ENCODE measurements at regions of chr12 and their contacts with region 1.

Region 1: GRCh38 chr12:29591140-29592020 is 93.9 kb upstream of the OVCH1 start:
- DNase-seq: peak; percentile 24
- ATAC-seq: peak; percentile 47; the same call in 1 of the 2 replicates
- H3K4me3 ChIP-seq: no peak overlapping the region
- H3K27ac ChIP-seq: no peak overlapping the region
- H3K4me1 ChIP-seq: peaks cover 8% of the 10 kb centered on the region
- H3K27me3 ChIP-seq: no peaks in the 10 kb centered on the region
- CTCF ChIP-seq: peak; percentile 31
- POLR2A ChIP-seq: no peak
- RAD21 ChIP-seq: no peak

Region 2: DNA sequence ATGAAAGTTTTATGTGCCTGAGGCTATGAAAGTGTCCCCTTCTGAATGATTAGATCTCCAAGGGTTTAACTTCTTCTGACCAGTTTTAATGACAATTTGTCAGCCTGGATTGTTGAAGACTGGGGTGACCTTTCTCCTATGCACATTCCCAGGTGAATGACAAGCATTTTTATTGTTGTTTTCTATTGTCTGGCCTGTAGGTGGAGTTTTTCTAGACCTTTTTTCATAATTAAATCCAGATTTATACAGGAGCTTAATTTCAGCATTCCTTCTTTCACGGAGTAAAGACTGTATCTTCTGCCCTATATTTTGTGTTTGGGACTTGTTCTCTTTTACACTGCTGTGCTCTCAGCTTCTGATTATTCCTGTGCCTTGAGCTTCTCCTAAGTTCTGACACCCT is 567.3 kb before region 1 on chr12:
- CTCF ChIA-PET with region 1: no interaction called
- POLR2A ChIA-PET with region 1: no interaction called
- dilution Hi-C with region 1: no loop called
- in situ Hi-C with region 1: no loop called
- intact Hi-C with region 1: no loop called
- DNase-seq: no peak
- ATAC-seq: no peak
- H3K4me3 ChIP-seq: no peak overlapping the region
- H3K27ac ChIP-seq: no peak overlapping the region
- H3K4me1 ChIP-seq: no peaks in the 10 kb centered on the region
- H3K27me3 ChIP-seq: no peaks in the 10 kb centered on the region; the same call in 1 of the 2 replicates
- CTCF ChIP-seq: 0 out of 2 replicates have a peak, but pooled peaks have one; percentile 10
- POLR2A ChIP-seq: no peak
- RAD21 ChIP-seq: no peak

Region 3: GRCh38 chr12:29088611-29089219 is 502.7 kb before region 1 on chr12:
- CTCF ChIA-PET with region 1: no interaction called
- POLR2A ChIA-PET with region 1: no interaction called
- dilution Hi-C with region 1: no loop called
- in situ Hi-C with region 1: no loop called
- intact Hi-C with region 1: no loop called
- DNase-seq: peak; percentile 16
- ATAC-seq: no peak
- H3K4me3 ChIP-seq: no peak overlapping the region
- H3K27ac ChIP-seq: no peak overlapping the region
- H3K4me1 ChIP-seq: no peaks in the 10 kb centered on the region
- H3K27me3 ChIP-seq: peaks cover 3% of the 10 kb centered on the region
- CTCF ChIP-seq: peak; percentile 40
- POLR2A ChIP-seq: no peak
- RAD21 ChIP-seq: no peak

Region 4: GRCh38 chr12:29611906-29612305 is 20.5 kb after region 1 on chr12:
- CTCF ChIA-PET with region 1: interaction called, 3 read pairs
- POLR2A ChIA-PET with region 1: no interaction called
- dilution Hi-C with region 1: no loop called
- in situ Hi-C with region 1: no loop called
- intact Hi-C with region 1: loop called (anchors 2 kb)
- DNase-seq: peak; percentile 84
- ATAC-seq: peak; percentile 66
- H3K4me3 ChIP-seq: no peak overlapping the region
- H3K27ac ChIP-seq: peak overlapping the region; percentile 27; the same call in 1 of the 2 replicates
- H3K4me1 ChIP-seq: peaks cover 15% of the 10 kb centered on the region
- H3K27me3 ChIP-seq: no peaks in the 10 kb centered on the region
- CTCF ChIP-seq: no peak
- POLR2A ChIP-seq: no peak
- RAD21 ChIP-seq: peak; percentile 14; the same call in 1 of the 2 replicates

Measured in IMR-90 (cell line).